ENCODE measurements at regions of chr4 and their contacts with region 1.

Region 1: GRCh38 chr4:37873386-37873785 is 17.5 kb upstream of the TBC1D1 start:
- DNase-seq: no peak
- ATAC-seq: peak; percentile 77 to 90
- H3K4me3 ChIP-seq: no peak overlapping the region
- H3K27ac ChIP-seq: peak overlapping the region in 2 of 4 donors; percentile 22 to 64
- H3K4me1 ChIP-seq: peaks cover 0 to 15% of the 10 kb centered on the region in 2 donors
- H3K27me3 ChIP-seq: no peaks in the 10 kb centered on the region
- CTCF ChIP-seq: no peak
- POLR2A ChIP-seq: no peak

Region 2: DNA sequence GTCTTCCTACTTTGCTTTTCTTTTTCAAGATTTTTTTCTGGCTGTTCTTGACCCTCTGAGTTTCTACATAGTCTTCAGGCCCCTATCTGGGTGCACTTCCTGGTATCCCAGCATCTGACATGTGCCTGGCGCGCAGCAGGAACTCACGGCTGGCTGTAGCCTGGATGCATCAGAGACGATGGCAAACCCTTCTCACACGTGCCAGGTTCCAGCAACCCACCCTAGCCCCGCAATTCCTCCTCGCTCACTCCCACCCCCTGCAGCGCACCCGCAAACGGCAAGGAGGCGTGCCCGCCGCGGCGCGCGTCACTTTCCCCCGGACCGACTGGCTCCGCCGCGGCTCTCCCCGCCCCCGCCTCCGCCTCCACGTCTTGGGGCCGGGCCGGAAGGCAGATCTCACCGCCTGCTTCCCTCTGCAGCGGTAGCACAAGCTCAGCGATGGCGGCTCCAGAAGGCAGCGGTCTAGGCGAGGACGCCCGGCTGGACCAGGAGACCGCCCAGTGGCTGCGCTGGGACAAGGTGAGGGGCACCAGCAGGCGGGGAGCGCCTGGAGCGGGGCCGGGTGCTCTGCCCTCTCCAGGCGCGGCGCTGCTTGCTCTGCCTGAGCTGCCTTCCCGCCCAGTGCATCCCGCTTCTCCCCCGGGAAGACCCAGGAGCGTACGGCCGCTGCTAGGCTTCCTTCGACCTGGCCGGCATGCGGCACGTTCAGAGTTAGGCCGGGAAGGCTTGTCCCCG is 46.9 kb before region 1 on chr4 and contains the start of gene PGM2:
- in situ Hi-C with region 1: no loop called
- intact Hi-C with region 1: loop called (anchors 5 kb)
- DNase-seq: peak; percentile 59 to 62
- ATAC-seq: peak; percentile 89 to 90
- H3K4me3 ChIP-seq: peak within 1 kb of the TSS; percentile 67 to 88 (median 78)
- H3K27ac ChIP-seq: peak within 1 kb of the TSS; percentile 60 to 76 (median 74)
- H3K4me1 ChIP-seq: peaks cover 10 to 11% of the 10 kb centered on the region in 2 donors
- H3K27me3 ChIP-seq: no peaks in the 10 kb centered on the region
- CTCF ChIP-seq: peak in 1 of 5 experiments; percentile 40
- POLR2A ChIP-seq: peak; percentile 55 to 76
- total RNA-seq, gene PGM2: 0.92 to 3.7 (median 2.1) TPM

Region 3: GRCh38 chr4:37891260-37892159 is 18.1 kb after region 1 on chr4:
- in situ Hi-C with region 1: no loop called
- intact Hi-C with region 1: no loop called
- DNase-seq: peak; percentile 33 to 71
- ATAC-seq: peak; percentile 44 to 54
- H3K4me3 ChIP-seq: peak overlapping the region; percentile 85 to 95 (median 88)
- H3K27ac ChIP-seq: peak overlapping the region; percentile 94 to 99 (median 96)
- H3K4me1 ChIP-seq: peaks cover 21 to 26% of the 10 kb centered on the region in 2 donors
- H3K27me3 ChIP-seq: no peaks in the 10 kb centered on the region
- CTCF ChIP-seq: peak in 1 of 5 experiments; percentile 15
- POLR2A ChIP-seq: peak in 1 of 2 donors; percentile 16

Region 4: GRCh38 chr4:37977471-37978247 is 104.3 kb after region 1 on chr4:
- in situ Hi-C with region 1: no loop called
- intact Hi-C with region 1: no loop called
- DNase-seq: peak; percentile 47 to 68
- ATAC-seq: peak; percentile 76 to 89
- H3K4me3 ChIP-seq: peak overlapping the region; percentile 63 to 83 (median 64)
- H3K27ac ChIP-seq: peak overlapping the region; percentile 79 to 92 (median 85)
- H3K4me1 ChIP-seq: peaks cover 24 to 30% of the 10 kb centered on the region in 2 donors
- H3K27me3 ChIP-seq: no peaks in the 10 kb centered on the region
- CTCF ChIP-seq: peak; percentile 62 to 86 (median 78)
- POLR2A ChIP-seq: peak; percentile 25 to 54

Measured in gastrocnemius medialis (tissue), 4 donors.